ENCODE measurements at regions of chr1 and their contacts with region 1.

Region 1: DNA sequence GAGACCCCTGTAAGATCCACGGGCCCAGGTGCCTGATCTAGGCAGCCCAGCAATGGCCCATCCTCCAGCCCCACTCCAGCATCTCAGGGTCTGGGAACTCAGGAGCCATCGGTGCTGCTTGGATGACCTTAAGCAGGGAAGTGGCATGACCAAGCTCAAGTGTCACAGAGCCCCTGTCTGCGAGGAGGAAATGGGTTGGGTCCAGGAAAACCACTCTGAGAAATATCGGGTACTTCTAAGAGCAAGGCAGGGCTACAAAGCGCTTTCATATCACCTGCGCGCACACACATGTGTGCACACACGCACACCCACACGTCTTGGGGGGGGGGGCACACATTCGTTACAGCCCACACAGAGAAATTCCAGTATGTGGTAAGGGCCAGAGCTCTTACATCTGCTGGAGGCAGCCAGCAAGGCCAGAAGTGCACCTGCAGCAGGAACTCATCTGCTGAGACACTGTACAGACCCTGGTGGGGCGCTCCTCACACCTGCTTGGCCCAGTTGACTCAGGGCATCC is 32.6 kb upstream of the SPOCD1 start:
- DNase-seq: peak; percentile 71
- ATAC-seq: peak; percentile 84
- H3K4me3 Mint-ChIP-seq: no peak overlapping the region
- H3K27ac Mint-ChIP-seq: peak overlapping the region; percentile 37
- H3K4me1 Mint-ChIP-seq: peaks cover 50% of the 10 kb centered on the region
- H3K27me3 Mint-ChIP-seq: no peaks in the 10 kb centered on the region
- CTCF ChIP-seq: no peak

Region 2: GRCh38 chr1:31818206-31818605 is 30.2 kb before region 1 on chr1:
- CTCF ChIA-PET with region 1: no interaction called
- POLR2A ChIA-PET with region 1: no interaction called
- intact Hi-C with region 1: no loop called
- DNase-seq: no peak
- ATAC-seq: no peak
- H3K4me3 Mint-ChIP-seq: no peak overlapping the region
- H3K27ac Mint-ChIP-seq: no peak overlapping the region
- H3K4me1 Mint-ChIP-seq: peaks cover 7% of the 10 kb centered on the region
- H3K27me3 Mint-ChIP-seq: no peaks in the 10 kb centered on the region
- CTCF ChIP-seq: no peak

Region 3: DNA sequence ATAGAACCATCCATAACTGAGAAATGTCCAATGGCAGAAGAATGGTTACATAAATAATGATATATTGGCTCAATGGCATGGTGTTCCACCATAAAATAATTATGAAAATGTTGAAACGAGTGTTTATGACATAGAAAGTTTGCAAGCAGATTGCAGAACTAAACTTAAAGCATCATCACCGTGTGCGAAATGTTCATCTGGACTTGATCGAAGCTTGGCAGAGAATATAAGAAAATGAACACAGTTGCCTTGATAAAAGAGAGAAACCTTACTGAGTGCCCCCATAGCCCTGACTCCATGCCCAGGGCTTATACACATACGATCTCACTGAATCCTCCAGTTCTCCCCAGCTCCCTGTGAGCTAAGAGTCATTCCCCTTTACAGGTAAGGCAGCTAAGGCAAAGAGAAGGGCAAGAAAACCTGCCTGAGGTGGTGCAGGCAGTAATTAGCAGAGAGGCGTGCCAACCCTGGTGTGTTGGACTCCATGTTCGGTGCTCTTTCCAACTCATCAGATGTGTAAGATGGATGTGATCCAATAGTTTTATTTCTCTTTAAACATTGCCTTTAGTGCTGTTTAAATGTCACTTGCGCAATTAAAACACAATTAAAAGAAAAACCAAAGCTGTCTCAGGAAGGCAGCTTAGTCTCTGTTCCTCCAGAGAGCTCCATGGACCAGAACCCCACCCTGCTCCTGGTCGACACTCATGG is 10.8 kb before region 1 on chr1:
- CTCF ChIA-PET with region 1: no interaction called
- POLR2A ChIA-PET with region 1: interaction called, 10 read pairs
- intact Hi-C with region 1: no loop called
- DNase-seq: no peak
- ATAC-seq: no peak
- H3K4me3 Mint-ChIP-seq: no peak overlapping the region
- H3K27ac Mint-ChIP-seq: no peak overlapping the region
- H3K4me1 Mint-ChIP-seq: peaks cover 14% of the 10 kb centered on the region
- H3K27me3 Mint-ChIP-seq: no peaks in the 10 kb centered on the region
- CTCF ChIP-seq: no peak

Region 4: GRCh38 chr1:31977385-31978131 is 129.1 kb after region 1 on chr1:
- CTCF ChIA-PET with region 1: no interaction called
- POLR2A ChIA-PET with region 1: no interaction called
- intact Hi-C with region 1: no loop called
- DNase-seq: no peak
- ATAC-seq: no peak
- H3K4me3 Mint-ChIP-seq: no peak overlapping the region
- H3K27ac Mint-ChIP-seq: peak overlapping the region; percentile 57
- H3K4me1 Mint-ChIP-seq: peaks cover 19% of the 10 kb centered on the region
- H3K27me3 Mint-ChIP-seq: no peaks in the 10 kb centered on the region
- CTCF ChIP-seq: no peak

Measured in activated CD8-positive, alpha-beta T cell treated with anti-CD3 and anti-CD28 coated beads for 36 hours (primary cell).